ENCODE measurements at regions of chr11 and their contacts with region 1.

Region 1: GRCh38 chr11:250740-251299 is 14.0 kb downstream of the PSMD13 start:
- DNase-seq: peak; percentile 61
- H3K4me3 ChIP-seq: no peak overlapping the region
- H3K27ac ChIP-seq: no peak overlapping the region
- H3K4me1 ChIP-seq: no peaks in the 10 kb centered on the region
- H3K27me3 ChIP-seq: no peaks in the 10 kb centered on the region
- CTCF ChIP-seq: peak; percentile 67 to 81
- POLR2A ChIP-seq: no peak

Region 2: DNA sequence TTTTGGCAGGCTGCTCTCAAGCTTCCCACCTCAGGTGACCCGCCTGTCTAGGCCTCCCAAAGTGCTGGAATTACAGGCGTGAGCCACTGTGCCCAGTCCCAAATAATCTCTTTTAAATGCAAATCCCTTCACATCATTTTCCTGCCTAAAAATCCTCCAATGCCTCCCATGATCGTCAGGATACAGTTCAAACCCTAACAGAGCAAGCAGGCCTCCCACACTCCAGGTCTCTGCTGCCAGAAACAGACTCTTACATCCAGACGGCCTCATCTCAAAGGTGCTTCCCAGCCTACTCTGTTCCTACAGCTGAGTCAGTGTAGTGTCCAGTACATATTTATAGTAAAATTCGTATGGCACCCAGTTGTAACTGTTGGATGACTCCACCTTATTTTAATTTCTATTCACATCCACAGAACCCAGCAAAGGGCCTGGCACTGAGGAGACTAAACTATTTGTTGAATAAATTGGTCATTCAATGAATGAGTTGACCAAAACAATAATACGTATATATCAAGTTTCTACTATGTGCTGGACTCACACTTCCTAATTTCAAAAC is 22.9 kb before region 1 on chr11:
- CTCF ChIA-PET with region 1: interaction called, 10 read pairs
- POLR2A ChIA-PET with region 1: no interaction called
- dilution Hi-C with region 1: no loop called
- intact Hi-C with region 1: no loop called
- DNase-seq: no peak
- H3K4me3 ChIP-seq: no peak overlapping the region
- H3K27ac ChIP-seq: no peak overlapping the region
- H3K4me1 ChIP-seq: no peaks in the 10 kb centered on the region
- H3K27me3 ChIP-seq: no peaks in the 10 kb centered on the region
- CTCF ChIP-seq: no peak
- POLR2A ChIP-seq: no peak

Region 3: GRCh38 chr11:261624-262023 is 10.8 kb after region 1 on chr11:
- CTCF ChIA-PET with region 1: interaction called, 19 read pairs
- POLR2A ChIA-PET with region 1: no interaction called
- dilution Hi-C with region 1: no loop called
- intact Hi-C with region 1: no loop called
- DNase-seq: no peak
- H3K4me3 ChIP-seq: no peak overlapping the region
- H3K27ac ChIP-seq: no peak overlapping the region
- H3K4me1 ChIP-seq: no peaks in the 10 kb centered on the region
- H3K27me3 ChIP-seq: no peaks in the 10 kb centered on the region
- CTCF ChIP-seq: no peak
- POLR2A ChIP-seq: no peak

Region 4: DNA sequence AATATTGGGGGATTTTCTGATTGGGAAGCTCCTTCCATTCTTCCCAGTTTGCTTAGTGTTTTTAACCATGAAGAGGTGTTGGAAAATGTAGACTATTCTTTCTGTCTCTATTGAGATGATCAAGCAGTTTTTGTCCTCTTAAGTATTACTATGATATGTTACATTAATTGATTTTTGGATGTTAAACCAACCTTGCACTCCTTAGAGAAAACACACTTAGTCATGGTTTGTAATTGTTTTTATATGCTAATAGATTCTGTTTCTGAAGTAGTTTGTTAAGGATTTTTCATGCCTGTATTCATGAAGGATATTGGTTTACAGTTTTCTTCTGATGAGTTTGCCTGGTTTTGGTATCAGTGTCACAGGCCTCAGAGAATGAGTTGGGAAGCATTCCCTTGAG is 25.4 kb after region 1 on chr11:
- CTCF ChIA-PET with region 1: interaction called, 12 read pairs
- POLR2A ChIA-PET with region 1: no interaction called
- dilution Hi-C with region 1: no loop called
- intact Hi-C with region 1: no loop called
- DNase-seq: no peak
- H3K4me3 ChIP-seq: no peak overlapping the region
- H3K27ac ChIP-seq: no peak overlapping the region
- H3K4me1 ChIP-seq: no peaks in the 10 kb centered on the region
- H3K27me3 ChIP-seq: peaks cover 36 to 57% of the 10 kb centered on the region in 2 experiments
- CTCF ChIP-seq: no peak
- POLR2A ChIP-seq: no peak

Region 5: DNA sequence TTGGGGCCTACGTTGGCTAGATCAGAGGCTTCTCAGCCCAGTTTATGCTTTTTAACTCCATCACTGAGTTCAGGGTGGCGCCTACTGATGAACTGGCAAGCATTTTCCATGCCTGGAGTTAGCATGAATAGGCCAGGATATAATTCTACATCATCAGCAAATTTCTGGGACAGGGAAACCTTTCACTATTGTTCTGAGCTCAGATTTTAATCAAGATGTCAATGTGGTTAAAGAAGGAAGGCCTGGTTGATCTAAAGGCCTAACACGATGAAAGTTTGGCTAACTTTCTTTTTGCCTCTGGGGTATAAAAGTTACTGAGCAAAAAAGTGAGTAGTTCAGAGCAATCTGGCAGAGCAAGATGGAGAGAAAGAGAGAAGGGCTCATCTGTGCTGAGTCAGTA is 91.5 kb after region 1 on chr11:
- CTCF ChIA-PET with region 1: no interaction called
- POLR2A ChIA-PET with region 1: no interaction called
- dilution Hi-C with region 1: no loop called
- intact Hi-C with region 1: no loop called
- DNase-seq: no peak
- H3K4me3 ChIP-seq: no peak overlapping the region
- H3K27ac ChIP-seq: no peak overlapping the region
- H3K4me1 ChIP-seq: no peaks in the 10 kb centered on the region
- H3K27me3 ChIP-seq: peaks cover 3 to 8% of the 10 kb centered on the region in 2 experiments
- CTCF ChIP-seq: no peak
- POLR2A ChIP-seq: no peak

Region 6: GRCh38 chr11:363948-364761 is 113.3 kb after region 1 on chr11:
- CTCF ChIA-PET with region 1: interaction called, 71 read pairs
- POLR2A ChIA-PET with region 1: no interaction called
- dilution Hi-C with region 1: no loop called
- intact Hi-C with region 1: no loop called
- DNase-seq: peak; percentile 37
- H3K4me3 ChIP-seq: no peak overlapping the region
- H3K27ac ChIP-seq: no peak overlapping the region
- H3K4me1 ChIP-seq: no peaks in the 10 kb centered on the region
- H3K27me3 ChIP-seq: peaks cover 13% of the 10 kb centered on the region in 2 experiments
- CTCF ChIP-seq: peak in 1 of 2 donors; percentile 61
- POLR2A ChIP-seq: no peak

Region 7: GRCh38 chr11:382081-382629 is 131.3 kb after region 1 on chr11:
- CTCF ChIA-PET with region 1: no interaction called
- POLR2A ChIA-PET with region 1: no interaction called
- dilution Hi-C with region 1: no loop called
- intact Hi-C with region 1: no loop called
- DNase-seq: no peak
- H3K4me3 ChIP-seq: no peak overlapping the region
- H3K27ac ChIP-seq: no peak overlapping the region
- H3K4me1 ChIP-seq: no peaks in the 10 kb centered on the region
- H3K27me3 ChIP-seq: no peaks in the 10 kb centered on the region
- CTCF ChIP-seq: no peak
- POLR2A ChIP-seq: no peak

Region 8: GRCh38 chr11:568306-569157 is 317.7 kb after region 1 on chr11:
- CTCF ChIA-PET with region 1: no interaction called
- POLR2A ChIA-PET with region 1: no interaction called
- dilution Hi-C with region 1: no loop called
- intact Hi-C with region 1: no loop called
- DNase-seq: peak; percentile 93
- H3K4me3 ChIP-seq: peak overlapping the region; percentile 53 to 62 (median 60)
- H3K27ac ChIP-seq: peak overlapping the region; percentile 32
- H3K4me1 ChIP-seq: peaks cover 11% of the 10 kb centered on the region
- H3K27me3 ChIP-seq: no peaks in the 10 kb centered on the region
- CTCF ChIP-seq: no peak
- POLR2A ChIP-seq: peak; percentile 63